ENCODE measurements at regions of chr1 and their contacts with region 1.

Region 1: GRCh38 chr1:13781907-13782644 is 82.1 kb downstream of the PRDM2 start:
- DNase-seq: no peak
- ATAC-seq: peak; percentile 75
- H3K4me3 Mint-ChIP-seq: no peak overlapping the region
- H3K27ac Mint-ChIP-seq: peak overlapping the region; percentile 76
- H3K4me1 Mint-ChIP-seq: peaks cover 52% of the 10 kb centered on the region
- H3K27me3 Mint-ChIP-seq: no peaks in the 10 kb centered on the region

Region 2: DNA sequence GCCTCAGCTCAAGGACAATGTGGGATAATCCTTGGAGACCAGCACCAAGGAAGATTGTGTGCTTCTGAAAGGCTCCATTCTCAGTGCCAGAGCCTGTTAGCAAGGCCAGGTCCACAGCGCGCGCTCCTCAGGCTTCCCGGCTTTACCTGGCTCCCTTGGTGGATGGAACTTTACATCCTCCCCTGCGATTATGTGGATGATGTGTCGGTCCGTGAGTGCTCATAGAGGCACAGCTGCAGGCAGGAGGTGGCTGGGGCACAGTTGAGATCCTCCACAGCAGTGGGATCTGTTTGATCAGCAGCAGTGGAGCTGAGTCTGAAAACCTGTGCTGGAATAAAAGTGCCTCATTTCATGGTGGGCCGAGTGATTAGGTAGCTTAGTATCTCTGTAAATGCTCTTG is 19.4 kb before region 1 on chr1:
- CTCF ChIA-PET with region 1: interaction called, 5 read pairs
- POLR2A ChIA-PET with region 1: interaction called, 3 read pairs
- intact Hi-C with region 1: loop called in 1 of 2 experiments (anchors 2 kb)
- DNase-seq: no peak
- ATAC-seq: no peak
- H3K4me3 Mint-ChIP-seq: no peak overlapping the region
- H3K27ac Mint-ChIP-seq: no peak overlapping the region
- H3K4me1 Mint-ChIP-seq: peaks cover 83% of the 10 kb centered on the region
- H3K27me3 Mint-ChIP-seq: no peaks in the 10 kb centered on the region

Measured in activated CD4-positive, alpha-beta T cell treated with anti-CD3 and anti-CD28 coated beads for 36 hours (primary cell).